OCI-LY7 (cell line): ENCODE measurements at regions of chr1 and their contacts with region 1.

Region 1: GRCh38 chr1:86499987-86500593 is 31.4 kb downstream of the CLCA1 start:
- DNase-seq: peak; percentile 91
- H3K4me3 ChIP-seq: no peak overlapping the region
- H3K27ac ChIP-seq: no peak overlapping the region
- H3K4me1 ChIP-seq: no peaks in the 10 kb centered on the region
- CTCF ChIP-seq: peak; percentile 100

Region 2: GRCh38 chr1:86466986-86467385 is 33.1 kb before region 1 on chr1:
- CTCF ChIA-PET with region 1: no interaction called
- POLR2A ChIA-PET with region 1: no interaction called
- intact Hi-C with region 1: no loop called
- DNase-seq: no peak
- H3K4me3 ChIP-seq: no peak overlapping the region
- H3K27ac ChIP-seq: no peak overlapping the region
- H3K4me1 ChIP-seq: no peaks in the 10 kb centered on the region
- CTCF ChIP-seq: no peak

Region 3: DNA sequence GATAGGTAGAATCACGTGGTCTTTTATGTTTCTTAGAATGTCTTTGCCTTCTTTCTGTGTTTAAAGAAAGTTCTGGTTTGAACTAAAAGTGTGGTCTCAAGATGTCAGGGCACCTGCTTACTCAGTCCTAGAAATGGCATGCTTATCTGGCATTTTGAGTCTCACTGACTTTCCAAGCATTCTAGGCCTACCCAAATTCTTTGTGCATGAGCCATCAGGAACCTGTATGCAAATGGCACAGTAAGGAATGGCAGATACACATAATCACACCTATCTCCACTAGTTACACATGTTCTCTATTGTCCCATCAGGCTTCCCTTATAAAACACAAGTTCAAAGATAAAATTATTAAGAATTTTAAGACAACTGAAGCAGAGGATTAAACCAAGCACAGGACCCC is 17.2 kb after region 1 on chr1:
- CTCF ChIA-PET with region 1: no interaction called
- POLR2A ChIA-PET with region 1: no interaction called
- intact Hi-C with region 1: no loop called
- DNase-seq: no peak
- H3K4me3 ChIP-seq: no peak overlapping the region
- H3K27ac ChIP-seq: no peak overlapping the region
- H3K4me1 ChIP-seq: no peaks in the 10 kb centered on the region
- CTCF ChIP-seq: no peak

Region 4: GRCh38 chr1:86687595-86687994 is 187.5 kb after region 1 on chr1:
- CTCF ChIA-PET with region 1: no interaction called
- POLR2A ChIA-PET with region 1: no interaction called
- intact Hi-C with region 1: loop called (anchors 5 kb)
- DNase-seq: peak; percentile 25
- H3K4me3 ChIP-seq: no peak overlapping the region
- H3K27ac ChIP-seq: no peak overlapping the region
- H3K4me1 ChIP-seq: no peaks in the 10 kb centered on the region
- CTCF ChIP-seq: peak; percentile 72

Region 5: GRCh38 chr1:86741947-86742572 is 242.0 kb after region 1 on chr1:
- CTCF ChIA-PET with region 1: no interaction called
- POLR2A ChIA-PET with region 1: no interaction called
- intact Hi-C with region 1: loop called (anchors 5 kb)
- DNase-seq: peak; percentile 56
- H3K4me3 ChIP-seq: no peak overlapping the region
- H3K27ac ChIP-seq: no peak overlapping the region
- H3K4me1 ChIP-seq: peaks cover 7% of the 10 kb centered on the region
- CTCF ChIP-seq: peak; percentile 98